HEK293 (cell line): ENCODE measurements at regions of chr2 and their contacts with region 1.

Region 1: DNA sequence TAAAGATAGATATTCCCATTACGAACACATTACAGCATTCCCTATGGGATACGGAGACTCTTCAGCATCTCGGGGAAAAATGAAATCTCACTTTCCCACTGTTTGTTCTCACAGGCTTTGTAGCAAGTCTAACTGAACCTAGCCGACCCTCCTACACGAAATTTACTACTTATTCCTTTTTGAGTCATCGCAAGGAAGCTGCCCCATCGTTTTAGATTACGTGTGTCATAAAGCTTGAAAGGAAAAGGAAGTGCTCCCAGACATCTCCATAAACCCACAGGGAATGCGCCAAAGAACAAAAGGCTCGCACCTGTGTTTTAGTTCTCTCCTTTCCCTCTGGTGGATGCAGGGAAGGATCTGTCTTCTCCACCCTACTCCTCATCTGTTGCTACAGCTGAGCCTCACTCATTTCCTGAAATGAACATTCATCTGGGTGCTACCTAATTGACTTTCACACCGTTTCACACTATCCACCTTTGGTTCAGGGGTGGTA is 76.2 kb upstream of the STK39 start:
- H3K4me3 ChIP-seq: no peak overlapping the region
- H3K27ac ChIP-seq: no peak overlapping the region
- H3K4me1 ChIP-seq: no peaks in the 10 kb centered on the region
- CTCF ChIP-seq: no peak

Region 2: GRCh38 chr2:168336864-168337263 is 13.3 kb after region 1 on chr2:
- CTCF ChIA-PET with region 1: interaction called, 10 read pairs
- POLR2A ChIA-PET with region 1: no interaction called
- H3K4me3 ChIP-seq: no peak overlapping the region
- H3K27ac ChIP-seq: no peak overlapping the region
- H3K4me1 ChIP-seq: no peaks in the 10 kb centered on the region
- CTCF ChIP-seq: peak; percentile 40; the same call in 1 of the 2 replicates